ENCODE measurements at regions of chr19 and their contacts with region 1.

Region 1: DNA sequence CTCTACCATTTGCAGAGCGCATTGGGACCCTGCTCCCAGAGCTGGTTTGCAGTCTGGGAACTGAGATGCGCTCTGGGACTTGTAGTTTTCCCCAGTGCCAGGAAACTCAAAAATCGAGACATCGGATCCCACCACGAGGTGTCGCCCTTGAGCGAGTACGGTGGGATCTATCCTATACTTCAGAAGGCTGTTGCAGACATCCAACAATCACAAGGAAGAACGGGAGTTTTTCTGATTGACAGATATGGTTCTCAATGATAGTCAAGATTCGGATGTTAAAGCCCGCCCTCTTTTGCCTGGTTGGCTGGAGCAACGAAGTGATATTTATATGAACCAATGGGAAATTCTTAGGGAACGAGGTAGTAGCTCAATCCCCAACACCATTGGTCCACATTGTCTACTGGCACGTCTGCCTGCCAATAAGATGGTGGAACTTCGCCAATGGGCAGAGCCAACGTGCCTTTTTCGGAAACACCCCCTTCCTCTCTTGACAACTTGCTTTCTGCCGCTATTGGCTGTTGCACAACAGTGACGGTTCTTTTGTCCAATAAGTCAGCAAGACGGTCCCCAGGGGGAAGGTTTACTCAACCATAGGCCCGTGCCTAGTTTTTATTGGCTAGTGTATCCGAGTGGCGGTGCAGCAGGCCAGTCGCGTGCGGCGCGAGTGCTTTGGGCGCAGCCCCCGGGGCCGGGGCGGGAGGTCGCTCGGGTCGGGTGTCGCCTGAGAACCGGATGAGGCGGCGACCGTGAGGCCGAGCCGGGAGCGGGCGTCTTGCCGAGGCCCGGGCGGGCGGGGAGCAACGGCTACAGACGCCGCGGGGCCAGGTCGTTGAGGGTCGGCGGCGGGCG is at the start of gene DNM2:
- DNase-seq: peak; percentile 100
- ATAC-seq: peak; percentile 93
- H3K4me3 ChIP-seq: peak within 1 kb of the TSS; percentile 81
- H3K27ac ChIP-seq: peak within 1 kb of the TSS; percentile 92
- H3K4me1 ChIP-seq: peaks cover 11% of the 10 kb centered on the region
- H3K27me3 ChIP-seq: no peaks in the 10 kb centered on the region
- CTCF ChIP-seq: peak; percentile 69 to 96 (median 89)
- EP300 ChIP-seq: no peak
- POLR2A ChIP-seq: peak; percentile 94
- RAD21 ChIP-seq: peak; percentile 79
- polyA plus RNA-seq, gene DNM2: 1.2 to 3.4 TPM

Region 2: GRCh38 chr19:10580979-10581631 is 136.5 kb before region 1 on chr19:
- CTCF ChIA-PET with region 1: interaction called, 10 read pairs
- POLR2A ChIA-PET with region 1: no interaction called
- RAD21 ChIA-PET with region 1: interaction called, 4 read pairs
- SMC1A ChIA-PET with region 1: no interaction called
- in situ Hi-C with region 1: no loop called
- intact Hi-C with region 1: no loop called
- DNase-seq: no peak
- ATAC-seq: peak; percentile 96
- H3K4me3 ChIP-seq: no peak overlapping the region
- H3K27ac ChIP-seq: no peak overlapping the region
- H3K4me1 ChIP-seq: peaks cover 2% of the 10 kb centered on the region; the same call in 1 of the 2 replicates
- H3K27me3 ChIP-seq: no peaks in the 10 kb centered on the region; a peak in 1 of 4 replicates
- CTCF ChIP-seq: peak; percentile 99 to 100 (median 100); a peak in 5 of 6 replicates
- EP300 ChIP-seq: no peak
- POLR2A ChIP-seq: no peak
- RAD21 ChIP-seq: peak; percentile 99

Region 3: DNA sequence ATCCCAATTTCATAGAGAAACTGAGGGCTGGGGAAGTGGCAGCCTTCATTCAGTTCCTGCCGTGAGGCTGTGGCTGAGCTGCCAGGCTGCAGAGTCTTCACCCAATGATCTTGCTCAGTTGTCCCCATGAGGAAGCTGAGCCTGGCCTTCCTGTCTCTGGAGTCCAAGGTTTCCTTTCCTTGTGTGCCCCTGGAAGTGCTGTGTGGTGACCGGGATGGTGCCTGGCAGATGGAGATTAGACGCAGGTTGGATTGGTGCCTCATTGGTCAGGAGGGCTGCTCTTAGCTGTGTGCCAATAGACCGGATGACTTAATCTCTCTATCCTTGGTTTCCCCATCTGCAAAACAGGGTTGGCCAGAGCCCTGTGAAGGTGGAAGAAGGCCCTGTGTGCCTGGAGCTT is 24.9 kb after region 1 on chr19:
- CTCF ChIA-PET with region 1: interaction called, 13 read pairs
- POLR2A ChIA-PET with region 1: interaction called, 4 read pairs
- RAD21 ChIA-PET with region 1: interaction called, 3 read pairs
- SMC1A ChIA-PET with region 1: no interaction called
- in situ Hi-C with region 1: no loop called
- intact Hi-C with region 1: no loop called
- DNase-seq: no peak
- ATAC-seq: no peak
- H3K4me3 ChIP-seq: no peak overlapping the region
- H3K27ac ChIP-seq: no peak overlapping the region
- H3K4me1 ChIP-seq: peaks cover 10% of the 10 kb centered on the region
- H3K27me3 ChIP-seq: no peaks in the 10 kb centered on the region
- CTCF ChIP-seq: no peak
- EP300 ChIP-seq: no peak
- POLR2A ChIP-seq: no peak
- RAD21 ChIP-seq: no peak

Region 4: DNA sequence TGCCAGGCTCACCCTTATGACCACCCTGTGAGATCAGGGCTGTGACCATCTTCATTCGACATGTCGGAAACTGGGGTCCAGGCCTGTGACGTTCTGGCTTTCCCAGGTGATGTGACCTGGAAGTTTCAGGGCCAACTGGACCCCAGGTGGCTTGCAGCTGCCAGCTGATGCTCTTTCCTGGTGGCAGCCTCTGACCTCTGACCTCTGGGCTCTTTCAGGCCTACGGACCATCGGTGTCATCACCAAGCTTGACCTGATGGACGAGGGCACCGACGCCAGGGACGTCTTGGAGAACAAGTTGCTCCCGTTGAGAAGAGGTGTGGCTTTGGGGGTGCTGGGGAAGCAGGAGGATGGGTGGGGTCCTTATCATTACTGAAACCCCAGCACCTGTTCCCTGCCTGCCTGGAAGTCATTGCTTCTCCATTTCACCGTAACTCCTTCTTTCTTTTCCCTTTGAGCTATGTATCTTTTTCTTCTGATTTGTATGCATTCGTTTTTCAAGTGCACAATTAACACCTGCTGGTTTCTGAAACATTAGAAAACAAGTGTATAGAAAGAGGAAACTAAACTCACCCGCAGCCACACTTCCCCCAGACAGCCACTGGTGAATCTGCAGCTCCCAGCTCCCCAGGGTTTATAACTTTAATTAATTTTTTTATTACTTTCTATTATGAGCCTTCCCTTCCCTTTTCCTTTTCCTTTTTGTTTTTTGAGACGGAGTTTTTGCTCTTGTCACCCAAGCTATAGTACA is 59.5 kb after region 1 on chr19:
- CTCF ChIA-PET with region 1: interaction called, 11 read pairs
- POLR2A ChIA-PET with region 1: interaction called, 7 read pairs
- RAD21 ChIA-PET with region 1: interaction called, 7 read pairs
- SMC1A ChIA-PET with region 1: interaction called, 4 read pairs
- in situ Hi-C with region 1: no loop called
- intact Hi-C with region 1: loop called (anchors 5 kb)
- DNase-seq: no peak
- ATAC-seq: peak; percentile 51
- H3K4me3 ChIP-seq: no peak overlapping the region
- H3K27ac ChIP-seq: peak overlapping the region; percentile 24
- H3K4me1 ChIP-seq: peaks cover 21% of the 10 kb centered on the region
- H3K27me3 ChIP-seq: no peaks in the 10 kb centered on the region
- CTCF ChIP-seq: no peak
- EP300 ChIP-seq: no peak
- POLR2A ChIP-seq: no peak
- RAD21 ChIP-seq: no peak

Region 5: GRCh38 chr19:10828981-10829821 is 111.6 kb after region 1 on chr19:
- CTCF ChIA-PET with region 1: interaction called, 9 read pairs
- POLR2A ChIA-PET with region 1: no interaction called
- RAD21 ChIA-PET with region 1: interaction called, 12 read pairs
- SMC1A ChIA-PET with region 1: interaction called, 3 read pairs
- in situ Hi-C with region 1: no loop called
- intact Hi-C with region 1: no loop called
- DNase-seq: no peak
- ATAC-seq: peak; percentile 57
- H3K4me3 ChIP-seq: no peak overlapping the region
- H3K27ac ChIP-seq: no peak overlapping the region
- H3K4me1 ChIP-seq: no peaks in the 10 kb centered on the region
- H3K27me3 ChIP-seq: no peaks in the 10 kb centered on the region
- CTCF ChIP-seq: peak in 2 of 3 experiments; percentile 11 to 36; a peak in 3 of 6 replicates
- EP300 ChIP-seq: no peak
- POLR2A ChIP-seq: no peak
- RAD21 ChIP-seq: 0 out of 2 replicates have a peak, but pooled peaks have one; percentile 15

Region 6: DNA sequence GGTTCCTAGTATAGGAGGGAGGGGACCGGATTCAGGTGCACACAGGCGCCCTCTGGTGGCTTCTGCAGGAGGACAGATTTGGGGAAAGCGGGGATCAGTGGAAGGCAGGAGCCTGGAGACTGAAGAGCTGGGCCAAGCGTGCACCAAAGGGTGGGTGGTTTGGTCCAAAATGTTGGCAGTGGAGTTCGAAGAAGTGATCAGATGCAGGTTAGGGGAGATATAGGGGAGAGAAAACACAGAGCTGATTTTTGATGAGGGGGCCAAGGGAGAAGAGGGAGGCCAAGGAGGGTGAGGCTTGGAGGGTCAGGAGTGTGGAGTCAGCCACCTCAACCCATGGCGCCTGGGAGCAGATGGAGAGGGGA is 146.9 kb after region 1 on chr19:
- CTCF ChIA-PET with region 1: interaction called, 211 read pairs
- POLR2A ChIA-PET with region 1: interaction called, 34 read pairs
- RAD21 ChIA-PET with region 1: interaction called, 102 read pairs
- SMC1A ChIA-PET with region 1: interaction called, 102 read pairs
- in situ Hi-C with region 1: loop called (anchors 5 kb)
- intact Hi-C with region 1: loop called (anchors 1 kb)
- DNase-seq: no peak
- ATAC-seq: peak; percentile 83
- H3K4me3 ChIP-seq: no peak overlapping the region
- H3K27ac ChIP-seq: no peak overlapping the region
- H3K4me1 ChIP-seq: peaks cover 16% of the 10 kb centered on the region
- H3K27me3 ChIP-seq: no peaks in the 10 kb centered on the region
- CTCF ChIP-seq: peak; percentile 88 to 96 (median 94)
- EP300 ChIP-seq: no peak
- POLR2A ChIP-seq: no peak
- RAD21 ChIP-seq: peak; percentile 71

Region 7: GRCh38 chr19:10979951-10980381 is 262.4 kb after region 1 on chr19:
- CTCF ChIA-PET with region 1: no interaction called
- POLR2A ChIA-PET with region 1: no interaction called
- RAD21 ChIA-PET with region 1: no interaction called
- SMC1A ChIA-PET with region 1: no interaction called
- in situ Hi-C with region 1: no loop called
- intact Hi-C with region 1: no loop called
- DNase-seq: peak; percentile 33
- ATAC-seq: peak; percentile 95
- H3K4me3 ChIP-seq: 0 out of 2 replicates have a peak overlapping the region, but pooled peaks have one; percentile 15
- H3K27ac ChIP-seq: 0 out of 2 replicates have a peak overlapping the region, but pooled peaks have one; percentile 20
- H3K4me1 ChIP-seq: peaks cover 26% of the 10 kb centered on the region
- H3K27me3 ChIP-seq: no peaks in the 10 kb centered on the region
- CTCF ChIP-seq: peak; percentile 24 to 32 (median 31); a peak in 2 of 6 replicates
- EP300 ChIP-seq: no peak
- POLR2A ChIP-seq: no peak
- RAD21 ChIP-seq: peak; percentile 32; the same call in 1 of the 2 replicates

Region 8: GRCh38 chr19:11090054-11090900 is 372.7 kb after region 1 on chr19:
- CTCF ChIA-PET with region 1: no interaction called
- POLR2A ChIA-PET with region 1: no interaction called
- RAD21 ChIA-PET with region 1: no interaction called
- SMC1A ChIA-PET with region 1: no interaction called
- in situ Hi-C with region 1: no loop called
- intact Hi-C with region 1: loop called (anchors 10 kb)
- DNase-seq: peak; percentile 76
- ATAC-seq: peak; percentile 88
- H3K4me3 ChIP-seq: peak overlapping the region; percentile 97
- H3K27ac ChIP-seq: peak overlapping the region; percentile 91
- H3K4me1 ChIP-seq: peaks cover 35% of the 10 kb centered on the region
- H3K27me3 ChIP-seq: no peaks in the 10 kb centered on the region
- CTCF ChIP-seq: peak in 2 of 3 experiments; percentile 12 to 16; a peak in 1 of 6 replicates
- EP300 ChIP-seq: no peak
- POLR2A ChIP-seq: peak; percentile 96
- RAD21 ChIP-seq: no peak